CD8-positive, alpha-beta T cell (primary cell): ENCODE measurements at regions of chr21 and their contacts with region 1.

Region 1: GRCh38 chr21:35467566-35467965 is 418.5 kb upstream of the RUNX1 start:
- DNase-seq: no peak
- ATAC-seq: no peak
- H3K4me3 ChIP-seq: no peak overlapping the region
- H3K4me3 Mint-ChIP-seq: no peak overlapping the region
- H3K27ac ChIP-seq: no peak overlapping the region
- H3K27ac Mint-ChIP-seq: no peak overlapping the region
- H3K4me1 ChIP-seq: no peaks in the 10 kb centered on the region
- H3K4me1 Mint-ChIP-seq: no peaks in the 10 kb centered on the region
- H3K27me3 ChIP-seq: no peaks in the 10 kb centered on the region
- H3K27me3 Mint-ChIP-seq: no peaks in the 10 kb centered on the region
- CTCF ChIP-seq: no peak

Region 2: GRCh38 chr21:34836103-34836932 is 631.2 kb before region 1 on chr21:
- CTCF ChIA-PET with region 1: no interaction called
- POLR2A ChIA-PET with region 1: no interaction called
- intact Hi-C with region 1: no loop called
- DNase-seq: peak in 1 of 9 experiments; percentile 37
- ATAC-seq: no peak
- H3K4me3 ChIP-seq: no peak overlapping the region
- H3K4me3 Mint-ChIP-seq: no peak overlapping the region
- H3K27ac ChIP-seq: no peak overlapping the region
- H3K27ac Mint-ChIP-seq: peak overlapping the region; percentile 69
- H3K4me1 ChIP-seq: peaks cover 16% of the 10 kb centered on the region
- H3K4me1 Mint-ChIP-seq: peaks cover 42% of the 10 kb centered on the region
- H3K27me3 ChIP-seq: no peaks in the 10 kb centered on the region
- H3K27me3 Mint-ChIP-seq: no peaks in the 10 kb centered on the region
- CTCF ChIP-seq: no peak

Region 3: DNA sequence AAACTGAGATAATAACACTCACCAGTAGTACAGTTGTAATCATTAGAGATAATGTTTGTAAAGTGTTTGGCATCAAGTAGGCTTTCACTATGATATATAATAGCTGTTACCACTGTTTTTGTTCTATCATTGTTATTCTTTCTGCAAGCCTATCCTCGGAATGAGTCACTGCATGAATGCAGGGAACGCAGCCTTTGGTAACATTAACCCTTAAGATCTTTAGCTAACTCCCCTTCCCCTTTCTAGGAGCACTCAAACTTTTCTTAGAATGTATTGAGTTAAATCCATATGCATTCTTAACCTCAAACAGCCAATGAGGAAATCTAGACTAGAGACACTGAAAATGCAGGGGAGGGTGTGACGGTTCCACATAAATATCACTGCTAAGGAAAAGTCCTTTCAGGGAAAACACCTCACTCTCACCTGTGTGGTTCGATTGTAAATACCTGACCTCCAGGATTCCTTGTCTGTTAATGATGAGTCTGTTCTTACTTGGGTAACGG is 125.5 kb after region 1 on chr21:
- CTCF ChIA-PET with region 1: no interaction called
- POLR2A ChIA-PET with region 1: no interaction called
- intact Hi-C with region 1: loop called in 1 of 2 experiments (anchors 10 kb)
- DNase-seq: no peak
- ATAC-seq: no peak
- H3K4me3 ChIP-seq: no peak overlapping the region
- H3K4me3 Mint-ChIP-seq: no peak overlapping the region
- H3K27ac ChIP-seq: no peak overlapping the region
- H3K27ac Mint-ChIP-seq: no peak overlapping the region
- H3K4me1 ChIP-seq: no peaks in the 10 kb centered on the region
- H3K4me1 Mint-ChIP-seq: no peaks in the 10 kb centered on the region
- H3K27me3 ChIP-seq: no peaks in the 10 kb centered on the region
- H3K27me3 Mint-ChIP-seq: peaks cover 11% of the 10 kb centered on the region
- CTCF ChIP-seq: no peak